Activated CD4-positive, alpha-beta T cell treated with anti-CD3 and anti-CD28 coated beads for 36 hours (primary cell): ENCODE measurements at regions of chr1 and their contacts with region 1.

Region 1: GRCh38 chr1:205523891-205524793 is 19.7 kb downstream of the CDK18 start:
- DNase-seq: peak; percentile 87
- ATAC-seq: peak; percentile 45
- H3K4me3 Mint-ChIP-seq: no peak overlapping the region
- H3K27ac Mint-ChIP-seq: no peak overlapping the region
- H3K4me1 Mint-ChIP-seq: no peaks in the 10 kb centered on the region
- H3K27me3 Mint-ChIP-seq: no peaks in the 10 kb centered on the region

Region 2: GRCh38 chr1:205273551-205273982 is 250.6 kb before region 1 on chr1:
- CTCF ChIA-PET with region 1: interaction called, 11 read pairs
- POLR2A ChIA-PET with region 1: no interaction called
- intact Hi-C with region 1: loop called in 1 of 2 experiments (anchors 5 kb)
- DNase-seq: peak; percentile 92
- ATAC-seq: peak; percentile 90
- H3K4me3 Mint-ChIP-seq: no peak overlapping the region
- H3K27ac Mint-ChIP-seq: no peak overlapping the region
- H3K4me1 Mint-ChIP-seq: peaks cover 35% of the 10 kb centered on the region
- H3K27me3 Mint-ChIP-seq: no peaks in the 10 kb centered on the region

Region 3: GRCh38 chr1:205348881-205349477 is 175.2 kb before region 1 on chr1:
- CTCF ChIA-PET with region 1: interaction called, 54 read pairs
- POLR2A ChIA-PET with region 1: no interaction called
- intact Hi-C with region 1: loop called (anchors 1 kb)
- DNase-seq: no peak
- ATAC-seq: no peak
- H3K4me3 Mint-ChIP-seq: no peak overlapping the region
- H3K27ac Mint-ChIP-seq: no peak overlapping the region
- H3K4me1 Mint-ChIP-seq: peaks cover 5% of the 10 kb centered on the region
- H3K27me3 Mint-ChIP-seq: peaks cover 20% of the 10 kb centered on the region

Region 4: GRCh38 chr1:205396967-205397616 is 127.0 kb before region 1 on chr1:
- CTCF ChIA-PET with region 1: interaction called, 49 read pairs
- POLR2A ChIA-PET with region 1: no interaction called
- intact Hi-C with region 1: loop called (anchors 1 kb)
- DNase-seq: peak; percentile 38
- ATAC-seq: peak; percentile 68
- H3K4me3 Mint-ChIP-seq: no peak overlapping the region
- H3K27ac Mint-ChIP-seq: no peak overlapping the region
- H3K4me1 Mint-ChIP-seq: no peaks in the 10 kb centered on the region
- H3K27me3 Mint-ChIP-seq: peaks cover 6% of the 10 kb centered on the region

Region 5: GRCh38 chr1:205512059-205513045 is 11.8 kb before region 1 on chr1:
- CTCF ChIA-PET with region 1: interaction called, 19 read pairs
- POLR2A ChIA-PET with region 1: no interaction called
- intact Hi-C with region 1: no loop called
- DNase-seq: no peak
- ATAC-seq: no peak
- H3K4me3 Mint-ChIP-seq: no peak overlapping the region
- H3K27ac Mint-ChIP-seq: no peak overlapping the region
- H3K4me1 Mint-ChIP-seq: no peaks in the 10 kb centered on the region
- H3K27me3 Mint-ChIP-seq: no peaks in the 10 kb centered on the region

Region 6: GRCh38 chr1:205591522-205592351 is 67.6 kb after region 1 on chr1:
- CTCF ChIA-PET with region 1: interaction called, 16 read pairs
- POLR2A ChIA-PET with region 1: no interaction called
- intact Hi-C with region 1: loop called in 1 of 2 experiments (anchors 2 kb)
- DNase-seq: peak; percentile 94
- ATAC-seq: peak; percentile 82
- H3K4me3 Mint-ChIP-seq: peak overlapping the region; percentile 78
- H3K27ac Mint-ChIP-seq: peak overlapping the region; percentile 78
- H3K4me1 Mint-ChIP-seq: peaks cover 35% of the 10 kb centered on the region
- H3K27me3 Mint-ChIP-seq: no peaks in the 10 kb centered on the region

Region 7: GRCh38 chr1:205858141-205858961 is 334.2 kb after region 1 on chr1:
- CTCF ChIA-PET with region 1: no interaction called
- POLR2A ChIA-PET with region 1: no interaction called
- intact Hi-C with region 1: no loop called
- DNase-seq: no peak
- ATAC-seq: no peak
- H3K4me3 Mint-ChIP-seq: no peak overlapping the region
- H3K27ac Mint-ChIP-seq: peak overlapping the region; percentile 2
- H3K4me1 Mint-ChIP-seq: peaks cover 3% of the 10 kb centered on the region
- H3K27me3 Mint-ChIP-seq: peaks cover 3% of the 10 kb centered on the region